Right ventricle myocardium superior (tissue), 1 donor: ENCODE measurements at regions of chr20 and their contacts with region 1.

Region 1: GRCh38 chr20:51306503-51307358 is 235.8 kb downstream of the NFATC2 start:
- DNase-seq: peak; percentile 84
- ATAC-seq: peak; percentile 95

Region 2: GRCh38 chr20:50790651-50791277 is 516.0 kb before region 1 on chr20:
- intact Hi-C with region 1: loop called (anchors 10 kb)
- DNase-seq: peak; percentile 91
- ATAC-seq: peak; percentile 85

Region 3: DNA sequence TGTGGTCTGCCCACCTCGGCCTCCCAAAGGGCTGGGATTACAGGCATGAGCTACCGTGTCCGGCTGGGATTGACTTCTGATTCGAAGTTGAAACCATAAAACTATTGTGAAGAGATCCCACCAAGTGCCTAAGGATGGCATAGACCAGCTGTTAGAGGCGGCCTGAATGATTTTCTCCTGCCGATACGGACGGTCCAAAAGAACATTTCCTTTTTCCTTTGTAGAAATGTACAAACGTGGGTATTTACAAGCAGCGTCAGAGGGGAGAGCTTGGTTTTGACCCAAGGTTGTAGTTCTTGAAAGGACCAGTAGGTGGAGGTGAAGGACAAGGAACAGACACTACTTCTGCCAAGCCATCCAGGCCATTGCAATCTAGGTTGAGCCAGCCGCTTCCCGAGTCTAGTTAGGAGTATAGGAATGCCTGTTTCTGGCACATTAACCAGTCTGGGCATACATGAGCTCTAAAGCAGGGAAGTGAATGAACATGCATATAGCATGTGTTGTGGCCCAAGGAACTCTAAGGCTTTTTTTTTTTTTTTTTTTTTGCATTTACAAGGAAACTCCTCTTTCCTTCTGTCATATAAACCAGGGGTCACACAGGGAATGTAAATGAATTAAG is 319.0 kb before region 1 on chr20:
- intact Hi-C with region 1: loop called (anchors 1 kb)
- DNase-seq: no peak
- ATAC-seq: peak; percentile 96

Region 4: DNA sequence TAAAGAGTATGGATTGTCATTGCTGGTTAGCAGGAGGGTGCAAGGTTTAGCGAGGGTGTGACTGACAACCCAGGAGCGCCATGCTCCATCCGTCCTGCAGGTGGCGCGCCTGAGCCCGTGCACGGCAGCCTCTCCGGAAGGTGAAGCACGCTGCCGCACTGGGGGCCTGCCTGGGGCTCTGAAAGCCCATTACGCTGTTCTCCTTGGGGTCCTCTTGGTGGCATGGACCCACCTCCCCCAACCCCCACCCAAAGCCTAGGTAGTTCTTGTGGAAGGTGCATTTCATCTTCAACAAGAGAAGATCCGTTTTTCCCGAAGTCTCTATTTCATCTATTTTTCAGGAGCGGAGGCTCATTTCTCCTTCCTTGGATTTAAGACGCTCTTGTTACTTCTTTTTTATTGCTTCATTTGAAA is 86.4 kb before region 1 on chr20:
- intact Hi-C with region 1: loop called (anchors 10 kb)
- DNase-seq: no peak
- ATAC-seq: no peak

Region 5: GRCh38 chr20:51237278-51237677 is 69.5 kb before region 1 on chr20:
- intact Hi-C with region 1: no loop called
- DNase-seq: peak; percentile 53
- ATAC-seq: peak; percentile 93